SK-N-SH (cell line): ENCODE measurements at regions of chr10 and their contacts with region 1.

Region 1: GRCh38 chr10:100481462-100482081 is 18.8 kb downstream of the WNT8B start:
- DNase-seq: peak; percentile 88
- H3K4me3 ChIP-seq: peak overlapping the region; percentile 54 to 65
- H3K27ac ChIP-seq: no peak overlapping the region
- H3K4me1 ChIP-seq: peaks cover 0 to 13% of the 10 kb centered on the region in 2 experiments; a peak in 1 of 4 replicates
- H3K27me3 ChIP-seq: peaks cover 25% of the 10 kb centered on the region; the same call in 1 of the 2 replicates
- CTCF ChIP-seq: peak; percentile 18
- EP300 ChIP-seq: no peak
- RAD21 ChIP-seq: peak; percentile 14; the same call in 1 of the 2 replicates

Region 2: GRCh38 chr10:100338434-100339036 is 143.0 kb before region 1 on chr10:
- CTCF ChIA-PET with region 1: interaction called, 14 read pairs
- POLR2A ChIA-PET with region 1: no interaction called
- DNase-seq: peak; percentile 78
- H3K4me3 ChIP-seq: no peak overlapping the region; a peak in 1 of 4 replicates
- H3K27ac ChIP-seq: no peak overlapping the region
- H3K4me1 ChIP-seq: peaks cover 0 to 12% of the 10 kb centered on the region in 2 experiments; a peak in 1 of 4 replicates
- H3K27me3 ChIP-seq: peaks cover 14% of the 10 kb centered on the region; the same call in 1 of the 2 replicates
- CTCF ChIP-seq: peak; percentile 90
- EP300 ChIP-seq: no peak
- RAD21 ChIP-seq: peak; percentile 97

Region 3: GRCh38 chr10:100446130-100446761 is 35.3 kb before region 1 on chr10:
- CTCF ChIA-PET with region 1: interaction called, 13 read pairs
- POLR2A ChIA-PET with region 1: no interaction called
- DNase-seq: no peak
- H3K4me3 ChIP-seq: no peak overlapping the region
- H3K27ac ChIP-seq: no peak overlapping the region
- H3K4me1 ChIP-seq: no peaks in the 10 kb centered on the region
- H3K27me3 ChIP-seq: no peaks in the 10 kb centered on the region; the same call in 1 of the 2 replicates
- CTCF ChIP-seq: no peak
- EP300 ChIP-seq: no peak
- RAD21 ChIP-seq: no peak

Region 4: GRCh38 chr10:100470367-100470766 is 11.2 kb before region 1 on chr10:
- CTCF ChIA-PET with region 1: interaction called, 31 read pairs
- POLR2A ChIA-PET with region 1: no interaction called
- DNase-seq: no peak
- H3K4me3 ChIP-seq: no peak overlapping the region
- H3K27ac ChIP-seq: no peak overlapping the region
- H3K4me1 ChIP-seq: peaks cover 0 to 12% of the 10 kb centered on the region in 2 experiments; a peak in 1 of 4 replicates
- H3K27me3 ChIP-seq: no peaks in the 10 kb centered on the region
- CTCF ChIP-seq: no peak
- EP300 ChIP-seq: no peak
- RAD21 ChIP-seq: no peak

Region 5: GRCh38 chr10:100529475-100530298 is 48.1 kb after region 1 on chr10 and contains the start of gene NDUFB8:
- CTCF ChIA-PET with region 1: interaction called, 16 read pairs
- POLR2A ChIA-PET with region 1: no interaction called
- DNase-seq: peak; percentile 89
- H3K4me3 ChIP-seq: peak within 1 kb of the TSS; percentile 75 to 88
- H3K27ac ChIP-seq: peak within 1 kb of the TSS; percentile 43 to 69; a peak in 2 of 4 replicates
- H3K4me1 ChIP-seq: peaks cover 6 to 11% of the 10 kb centered on the region in 2 experiments; a peak in 1 of 4 replicates
- H3K27me3 ChIP-seq: no peaks in the 10 kb centered on the region
- CTCF ChIP-seq: no peak
- EP300 ChIP-seq: no peak
- RAD21 ChIP-seq: no peak
- polyA plus RNA-seq, gene NDUFB8: 340 and 368 TPM in 2 replicates

Region 6: GRCh38 chr10:100917071-100917470 is 435.5 kb after region 1 on chr10:
- CTCF ChIA-PET with region 1: no interaction called
- POLR2A ChIA-PET with region 1: no interaction called
- DNase-seq: no peak
- H3K4me3 ChIP-seq: no peak overlapping the region
- H3K27ac ChIP-seq: no peak overlapping the region
- H3K4me1 ChIP-seq: peaks cover 5 to 13% of the 10 kb centered on the region in 2 experiments; a peak in 3 of 4 replicates
- H3K27me3 ChIP-seq: no peaks in the 10 kb centered on the region
- CTCF ChIP-seq: no peak
- EP300 ChIP-seq: no peak
- RAD21 ChIP-seq: no peak